AG04450 (cell line): ENCODE measurements at regions of chr11 and their contacts with region 1.

Region 1: DNA sequence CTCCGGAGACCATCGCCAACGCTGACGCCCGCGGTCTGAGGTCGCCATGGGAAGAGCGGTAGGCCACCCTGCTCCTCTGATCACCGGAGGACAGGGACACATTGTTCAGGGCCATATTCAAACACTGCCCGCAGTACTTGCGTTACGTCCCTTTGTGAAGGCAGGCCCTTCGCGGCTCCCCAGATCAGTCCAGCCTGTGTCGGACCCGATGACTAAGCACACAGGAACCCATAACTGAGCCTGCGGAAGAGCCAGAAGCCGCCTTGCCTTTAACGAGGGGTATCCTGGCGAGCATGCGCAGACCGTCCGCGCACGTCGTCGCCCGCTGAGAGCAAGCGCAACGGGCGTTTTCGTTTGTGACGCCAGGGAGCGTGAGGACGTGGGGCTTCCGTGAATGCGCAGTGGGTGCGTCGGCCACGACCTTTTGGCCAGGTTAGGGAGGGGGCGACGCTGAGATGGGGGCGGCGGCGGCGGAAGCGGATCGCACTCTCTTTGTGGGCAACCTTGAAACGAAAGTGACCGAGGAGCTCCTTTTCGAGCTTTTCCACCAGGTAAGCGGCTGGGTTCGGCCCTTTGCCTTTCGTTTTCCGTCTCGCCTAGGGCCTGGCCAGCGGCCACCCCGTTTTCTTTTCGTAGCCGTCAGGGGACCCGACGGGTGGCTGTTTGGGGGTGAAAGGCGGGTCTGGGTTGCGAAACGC is at the starts of genes C11orf71 and RBM7:
- DNase-seq: peak; percentile 99
- H3K4me3 ChIP-seq: peak within 1 kb of the TSS; percentile 93
- H3K27ac ChIP-seq: peak within 1 kb of the TSS; percentile 100
- H3K27me3 ChIP-seq: no peaks in the 10 kb centered on the region
- CTCF ChIP-seq: 0 out of 2 replicates have a peak, but pooled peaks have one; percentile 1
- polyA plus RNA-seq, gene C11orf71: 3.8 and 4.5 TPM in 2 replicates
- polyA plus RNA-seq, gene RBM7: 57.1 and 59.8 TPM in 2 replicates

Region 2: GRCh38 chr11:114243461-114244372 is 156.6 kb before region 1 on chr11:
- CTCF ChIA-PET with region 1: no interaction called
- POLR2A ChIA-PET with region 1: interaction called, 10 read pairs
- DNase-seq: no peak
- H3K4me3 ChIP-seq: no peak overlapping the region
- H3K27ac ChIP-seq: no peak overlapping the region
- H3K27me3 ChIP-seq: peaks cover 3% of the 10 kb centered on the region
- CTCF ChIP-seq: no peak

Region 3: DNA sequence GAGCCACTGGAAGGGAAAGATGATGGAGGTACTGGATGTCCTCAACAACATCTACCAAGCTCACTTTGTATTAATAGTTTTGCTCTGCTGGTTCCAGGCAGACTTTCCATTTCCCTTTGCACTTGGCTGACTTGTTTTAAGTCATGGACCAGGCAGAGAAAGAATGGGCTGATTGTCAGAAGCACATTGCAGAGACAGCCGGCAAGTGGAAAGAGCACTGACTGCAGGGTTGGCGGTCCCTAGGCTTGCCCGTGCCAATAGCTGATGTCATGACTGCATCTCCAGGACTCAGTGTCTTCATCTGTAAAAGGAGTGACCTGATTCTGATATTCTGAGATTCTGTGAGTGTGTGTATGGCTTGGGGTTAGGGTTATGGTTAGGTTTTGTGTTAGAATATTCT is 125.1 kb before region 1 on chr11:
- CTCF ChIA-PET with region 1: no interaction called
- POLR2A ChIA-PET with region 1: no interaction called
- DNase-seq: no peak
- H3K4me3 ChIP-seq: no peak overlapping the region
- H3K27ac ChIP-seq: no peak overlapping the region
- H3K27me3 ChIP-seq: peaks cover 28% of the 10 kb centered on the region
- CTCF ChIP-seq: no peak

Region 4: GRCh38 chr11:114348200-114349191 is 51.9 kb before region 1 on chr11:
- CTCF ChIA-PET with region 1: interaction called, 13 read pairs
- POLR2A ChIA-PET with region 1: interaction called, 6 read pairs
- DNase-seq: peak; percentile 43
- H3K4me3 ChIP-seq: no peak overlapping the region
- H3K27ac ChIP-seq: no peak overlapping the region
- H3K27me3 ChIP-seq: no peaks in the 10 kb centered on the region
- CTCF ChIP-seq: peak; percentile 66